IMR-90 (cell line): ENCODE measurements at regions of chr2 and their contacts with region 1.

Region 1: GRCh38 chr2:232979871-232980461 is 33.1 kb downstream of the NGEF start:
- DNase-seq: peak; percentile 77
- ATAC-seq: peak; percentile 84
- H3K4me3 ChIP-seq: no peak overlapping the region
- H3K27ac ChIP-seq: no peak overlapping the region
- H3K4me1 ChIP-seq: peaks cover 3% of the 10 kb centered on the region; the same call in 1 of the 2 replicates
- H3K27me3 ChIP-seq: peaks cover 16% of the 10 kb centered on the region
- CTCF ChIP-seq: peak; percentile 36
- POLR2A ChIP-seq: no peak
- RAD21 ChIP-seq: peak; percentile 54

Region 2: GRCh38 chr2:232831496-232831895 is 148.5 kb before region 1 on chr2:
- CTCF ChIA-PET with region 1: no interaction called
- POLR2A ChIA-PET with region 1: no interaction called
- dilution Hi-C with region 1: no loop called
- in situ Hi-C with region 1: no loop called
- intact Hi-C with region 1: no loop called
- DNase-seq: no peak
- ATAC-seq: no peak
- H3K4me3 ChIP-seq: no peak overlapping the region
- H3K27ac ChIP-seq: no peak overlapping the region
- H3K4me1 ChIP-seq: no peaks in the 10 kb centered on the region
- H3K27me3 ChIP-seq: no peaks in the 10 kb centered on the region
- CTCF ChIP-seq: no peak
- POLR2A ChIP-seq: no peak
- RAD21 ChIP-seq: no peak

Region 3: DNA sequence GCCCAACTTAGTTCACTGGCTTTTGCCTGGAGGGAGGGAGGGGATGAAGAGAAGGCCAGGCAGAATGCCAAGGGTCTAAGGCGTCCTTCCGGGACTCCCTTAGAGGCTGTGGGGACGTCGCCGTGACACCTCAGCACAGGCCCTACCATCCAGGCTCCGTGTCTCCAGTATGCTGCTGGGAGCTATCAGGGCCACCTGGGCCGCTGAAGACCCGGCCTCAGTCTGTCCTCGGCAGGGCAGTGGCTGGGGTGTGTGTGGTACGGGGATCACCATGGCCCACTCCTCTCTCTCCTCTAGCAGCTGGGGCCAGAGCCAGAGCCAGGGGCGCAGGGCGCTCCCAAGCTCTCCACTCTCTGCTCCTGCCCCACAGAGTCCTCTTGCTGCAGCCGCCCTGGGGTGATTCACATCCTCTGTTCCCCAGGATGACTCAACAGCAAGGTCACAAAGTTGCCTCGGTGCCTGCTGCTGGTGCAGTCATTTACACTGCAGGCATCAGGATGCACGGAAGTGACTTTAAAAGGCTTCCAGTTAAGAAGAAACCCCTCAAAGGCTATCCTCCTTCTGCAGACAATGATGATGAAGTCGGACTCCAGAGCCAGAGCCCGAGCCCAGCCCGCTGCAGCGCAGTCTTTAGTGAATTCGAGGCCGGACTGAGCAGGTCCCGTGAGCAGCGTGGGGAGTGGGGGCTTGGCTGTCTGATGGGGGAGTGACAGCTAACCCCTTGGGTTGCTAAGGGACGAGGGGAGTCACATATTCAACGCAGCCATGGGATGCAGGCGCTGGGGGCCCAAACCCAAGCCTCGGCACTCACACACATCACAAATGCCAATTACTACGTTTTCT is 78.0 kb before region 1 on chr2:
- CTCF ChIA-PET with region 1: no interaction called
- POLR2A ChIA-PET with region 1: no interaction called
- dilution Hi-C with region 1: no loop called
- in situ Hi-C with region 1: no loop called
- intact Hi-C with region 1: loop called (anchors 5 kb)
- DNase-seq: peak; percentile 94
- ATAC-seq: peak; percentile 99
- H3K4me3 ChIP-seq: no peak overlapping the region
- H3K27ac ChIP-seq: peak overlapping the region; percentile 80
- H3K4me1 ChIP-seq: peaks cover 9% of the 10 kb centered on the region
- H3K27me3 ChIP-seq: no peaks in the 10 kb centered on the region
- CTCF ChIP-seq: no peak
- POLR2A ChIP-seq: no peak
- RAD21 ChIP-seq: peak; percentile 21; the same call in 1 of the 2 replicates

Region 4: DNA sequence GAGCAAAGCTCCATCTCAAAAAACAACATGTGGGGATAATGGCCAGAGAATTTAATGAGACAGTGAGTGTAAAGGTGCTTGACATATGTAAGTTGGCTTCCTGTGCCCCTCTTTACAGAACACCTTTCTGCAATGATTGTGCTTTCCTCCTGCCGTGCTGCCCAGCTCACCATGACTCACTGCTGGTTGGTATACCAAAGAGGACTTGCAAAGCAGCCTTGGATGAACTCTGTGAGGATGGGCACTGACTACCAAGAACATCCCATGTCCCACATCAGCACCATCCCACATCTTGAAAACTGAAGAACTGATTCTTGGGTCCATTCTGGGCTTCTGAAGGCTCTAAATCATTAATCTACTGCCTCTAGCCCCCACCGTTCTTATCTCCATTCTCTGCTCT is 19.1 kb before region 1 on chr2:
- CTCF ChIA-PET with region 1: no interaction called
- POLR2A ChIA-PET with region 1: no interaction called
- dilution Hi-C with region 1: no loop called
- in situ Hi-C with region 1: no loop called
- intact Hi-C with region 1: no loop called
- DNase-seq: no peak
- ATAC-seq: no peak
- H3K4me3 ChIP-seq: no peak overlapping the region
- H3K27ac ChIP-seq: no peak overlapping the region
- H3K4me1 ChIP-seq: no peaks in the 10 kb centered on the region
- H3K27me3 ChIP-seq: peaks cover 10% of the 10 kb centered on the region
- CTCF ChIP-seq: no peak
- POLR2A ChIP-seq: no peak
- RAD21 ChIP-seq: no peak

Region 5: GRCh38 chr2:233026192-233026813 is 46.3 kb after region 1 on chr2:
- CTCF ChIA-PET with region 1: interaction called, 3 read pairs
- POLR2A ChIA-PET with region 1: no interaction called
- dilution Hi-C with region 1: no loop called
- in situ Hi-C with region 1: no loop called
- intact Hi-C with region 1: loop called (anchors 5 kb)
- DNase-seq: peak; percentile 50
- ATAC-seq: peak; percentile 67; the same call in 1 of the 2 replicates
- H3K4me3 ChIP-seq: no peak overlapping the region
- H3K27ac ChIP-seq: no peak overlapping the region
- H3K4me1 ChIP-seq: no peaks in the 10 kb centered on the region
- H3K27me3 ChIP-seq: peaks cover 6% of the 10 kb centered on the region
- CTCF ChIP-seq: no peak
- POLR2A ChIP-seq: no peak
- RAD21 ChIP-seq: no peak

Region 6: GRCh38 chr2:233793465-233794127 is 813.6 kb after region 1 on chr2:
- CTCF ChIA-PET with region 1: no interaction called
- POLR2A ChIA-PET with region 1: no interaction called
- dilution Hi-C with region 1: no loop called
- in situ Hi-C with region 1: no loop called
- intact Hi-C with region 1: no loop called
- DNase-seq: no peak
- ATAC-seq: no peak
- H3K4me3 ChIP-seq: no peak overlapping the region
- H3K27ac ChIP-seq: no peak overlapping the region
- H3K4me1 ChIP-seq: no peaks in the 10 kb centered on the region
- H3K27me3 ChIP-seq: peaks cover 10% of the 10 kb centered on the region
- CTCF ChIP-seq: no peak
- POLR2A ChIP-seq: no peak
- RAD21 ChIP-seq: no peak